CD8-positive, alpha-beta T cell (primary cell): ENCODE measurements at regions of chr18 and their contacts with region 1.

Region 1: GRCh38 chr18:7104649-7105048 is 12.9 kb downstream of the LAMA1 start:
- DNase-seq: no peak
- ATAC-seq: no peak
- H3K4me3 ChIP-seq: no peak overlapping the region
- H3K4me3 Mint-ChIP-seq: no peak overlapping the region
- H3K27ac ChIP-seq: no peak overlapping the region
- H3K27ac Mint-ChIP-seq: no peak overlapping the region
- H3K4me1 ChIP-seq: no peaks in the 10 kb centered on the region
- H3K4me1 Mint-ChIP-seq: no peaks in the 10 kb centered on the region
- H3K27me3 ChIP-seq: no peaks in the 10 kb centered on the region
- H3K27me3 Mint-ChIP-seq: no peaks in the 10 kb centered on the region
- CTCF ChIP-seq: no peak

Region 2: DNA sequence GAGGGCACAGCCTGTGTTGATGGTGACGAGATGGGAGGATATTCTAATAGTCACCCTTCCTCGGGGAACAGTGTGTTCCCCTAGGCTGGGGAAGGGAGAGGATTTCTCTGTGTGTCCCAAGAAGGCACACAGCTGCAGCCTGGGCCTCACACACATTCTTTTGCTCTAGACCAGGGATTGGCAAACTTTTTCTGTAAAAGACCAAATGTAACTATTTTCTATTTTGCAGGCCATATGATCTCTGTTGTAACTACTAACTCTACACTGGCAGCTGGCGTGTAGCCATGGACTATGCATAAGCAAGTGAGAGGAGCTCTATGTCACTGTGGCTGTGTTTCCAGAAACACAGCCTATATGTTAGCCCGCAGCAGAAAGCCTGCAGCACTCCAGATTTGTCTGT is 309.3 kb before region 1 on chr18:
- CTCF ChIA-PET with region 1: no interaction called
- POLR2A ChIA-PET with region 1: no interaction called
- intact Hi-C with region 1: no loop called
- DNase-seq: no peak
- ATAC-seq: no peak
- H3K4me3 ChIP-seq: no peak overlapping the region
- H3K4me3 Mint-ChIP-seq: no peak overlapping the region
- H3K27ac ChIP-seq: no peak overlapping the region
- H3K27ac Mint-ChIP-seq: no peak overlapping the region
- H3K4me1 ChIP-seq: no peaks in the 10 kb centered on the region
- H3K4me1 Mint-ChIP-seq: no peaks in the 10 kb centered on the region
- H3K27me3 ChIP-seq: no peaks in the 10 kb centered on the region
- H3K27me3 Mint-ChIP-seq: no peaks in the 10 kb centered on the region
- CTCF ChIP-seq: no peak

Region 3: DNA sequence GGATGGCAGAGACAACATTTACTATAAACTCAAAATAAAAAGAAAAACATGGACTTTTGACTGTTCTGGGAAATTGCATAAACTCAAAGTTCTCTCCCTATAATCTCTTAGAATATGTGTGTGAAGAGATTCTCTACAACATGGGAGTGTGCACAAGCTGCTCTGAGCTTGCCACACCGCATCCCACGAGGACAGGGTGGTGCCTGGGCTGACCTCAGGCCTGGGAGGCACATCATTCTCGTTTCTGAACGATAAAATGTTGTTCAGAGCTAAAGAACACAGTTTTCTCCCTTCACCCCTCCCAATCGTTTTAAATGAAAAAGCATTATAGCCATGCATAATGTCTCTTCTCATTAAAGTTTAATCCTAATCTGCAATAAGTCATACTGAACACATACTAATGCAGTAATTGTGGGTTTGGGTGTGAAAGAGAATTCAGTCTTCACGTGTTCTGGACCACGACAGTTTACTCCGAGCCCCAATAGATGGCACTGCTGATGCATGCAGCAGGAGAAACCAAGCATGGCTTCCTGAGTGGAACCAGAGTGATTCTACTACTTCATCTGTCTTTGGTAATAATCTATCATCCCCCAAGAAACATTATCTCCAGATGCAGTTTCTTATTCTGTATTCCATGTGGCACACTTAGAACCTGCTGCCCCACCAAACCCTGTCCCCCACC is 59.8 kb after region 1 on chr18:
- CTCF ChIA-PET with region 1: no interaction called
- POLR2A ChIA-PET with region 1: no interaction called
- intact Hi-C with region 1: loop called in 1 of 2 experiments (anchors 10 kb)
- DNase-seq: no peak
- ATAC-seq: no peak
- H3K4me3 ChIP-seq: no peak overlapping the region
- H3K4me3 Mint-ChIP-seq: no peak overlapping the region
- H3K27ac ChIP-seq: no peak overlapping the region
- H3K27ac Mint-ChIP-seq: no peak overlapping the region
- H3K4me1 ChIP-seq: no peaks in the 10 kb centered on the region
- H3K4me1 Mint-ChIP-seq: no peaks in the 10 kb centered on the region
- H3K27me3 ChIP-seq: no peaks in the 10 kb centered on the region
- H3K27me3 Mint-ChIP-seq: peaks cover 2% of the 10 kb centered on the region
- CTCF ChIP-seq: no peak